Heart right ventricle (tissue), 16 donors: ENCODE measurements at regions of chr9 and their contacts with region 1.

Region 1: GRCh38 chr9:137114610-137115391 is at the start of gene DPP7:
- DNase-seq: peak; percentile 73 to 80
- ATAC-seq: peak; percentile 66 to 91 (median 84)
- H3K4me3 ChIP-seq: peak within 1 kb of the TSS; percentile 66 to 95 (median 86)
- H3K27ac ChIP-seq: peak within 1 kb of the TSS; percentile 62 to 95 (median 78)
- H3K4me1 ChIP-seq: peaks cover 12 to 40% (median 23%) of the 10 kb centered on the region in 9 donors
- H3K27me3 ChIP-seq: no peaks in the 10 kb centered on the region
- CTCF ChIP-seq: no peak
- total RNA-seq, gene DPP7: 91.4 to 167 (median 118) TPM

Region 2: DNA sequence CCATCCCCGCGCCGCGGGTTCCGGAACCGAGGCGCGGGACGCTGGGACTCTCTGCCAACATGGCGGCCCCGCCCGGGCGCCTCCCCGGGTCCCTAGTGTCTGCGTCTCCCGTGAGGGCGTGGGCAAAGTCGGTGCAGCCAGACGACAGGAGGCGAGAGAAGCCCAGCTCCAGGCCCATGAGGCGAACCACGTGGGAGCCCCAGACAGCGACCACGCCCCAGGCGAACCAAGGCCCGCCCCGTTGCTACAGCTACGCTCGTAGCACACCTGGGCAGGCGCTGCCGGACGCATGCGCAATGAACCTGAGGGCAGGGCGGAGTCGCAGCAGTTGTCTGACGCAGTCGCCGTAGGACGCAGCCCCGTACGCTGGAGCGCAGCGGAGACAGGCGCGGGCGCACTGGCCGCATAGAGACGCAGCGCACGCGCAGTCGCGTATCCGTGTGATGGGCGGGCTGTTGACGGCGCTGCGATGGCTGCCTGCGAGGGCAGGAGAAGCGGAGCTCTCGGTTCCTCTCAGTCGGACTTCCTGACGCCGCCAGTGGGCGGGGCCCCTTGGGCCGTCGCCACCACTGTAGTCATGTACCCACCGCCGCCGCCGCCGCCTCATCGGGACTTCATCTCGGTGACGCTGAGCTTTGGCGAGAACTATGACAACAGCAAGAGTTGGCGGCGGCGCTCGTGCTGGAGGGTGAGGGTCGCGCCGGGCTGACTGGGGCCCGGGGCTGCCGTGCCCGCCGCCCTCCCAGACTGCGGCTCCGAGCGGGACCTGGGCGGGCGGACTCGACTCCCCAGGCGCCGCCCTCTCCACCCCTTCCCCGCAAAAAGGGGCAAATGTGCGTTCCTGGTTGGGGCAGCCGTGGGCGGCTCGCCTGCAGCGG is 28.0 kb before region 1 on chr9 and contains the start of gene MAN1B1:
- intact Hi-C with region 1: loop called in 1 of 10 experiments (anchors 1 kb)
- DNase-seq: peak; percentile 97 to 99
- ATAC-seq: peak; percentile 92 to 97 (median 96)
- H3K4me3 ChIP-seq: peak within 1 kb of the TSS; percentile 67 to 96 (median 84)
- H3K27ac ChIP-seq: peak within 1 kb of the TSS; percentile 76 to 98 (median 96)
- H3K4me1 ChIP-seq: peaks cover 6 to 45% (median 24%) of the 10 kb centered on the region in 9 donors
- H3K27me3 ChIP-seq: no peaks in the 10 kb centered on the region
- CTCF ChIP-seq: no peak
- total RNA-seq, gene MAN1B1: 16.9 to 27.7 (median 20.9) TPM

Region 3: GRCh38 chr9:137240861-137241489 is 126.2 kb after region 1 on chr9 and contains the start of gene TUBB4B:
- intact Hi-C with region 1: loop called in 1 of 10 experiments (anchors 5 kb)
- DNase-seq: peak; percentile 99 to 100
- ATAC-seq: peak; percentile 85 to 94 (median 89)
- H3K4me3 ChIP-seq: peak within 1 kb of the TSS; percentile 75 to 97 (median 92)
- H3K27ac ChIP-seq: peak within 1 kb of the TSS; percentile 91 to 100 (median 98)
- H3K4me1 ChIP-seq: peaks cover 16 to 71% (median 53%) of the 10 kb centered on the region in 9 donors
- H3K27me3 ChIP-seq: no peaks in the 10 kb centered on the region
- CTCF ChIP-seq: no peak
- total RNA-seq, gene TUBB4B: 211 to 495 (median 330) TPM

Region 4: DNA sequence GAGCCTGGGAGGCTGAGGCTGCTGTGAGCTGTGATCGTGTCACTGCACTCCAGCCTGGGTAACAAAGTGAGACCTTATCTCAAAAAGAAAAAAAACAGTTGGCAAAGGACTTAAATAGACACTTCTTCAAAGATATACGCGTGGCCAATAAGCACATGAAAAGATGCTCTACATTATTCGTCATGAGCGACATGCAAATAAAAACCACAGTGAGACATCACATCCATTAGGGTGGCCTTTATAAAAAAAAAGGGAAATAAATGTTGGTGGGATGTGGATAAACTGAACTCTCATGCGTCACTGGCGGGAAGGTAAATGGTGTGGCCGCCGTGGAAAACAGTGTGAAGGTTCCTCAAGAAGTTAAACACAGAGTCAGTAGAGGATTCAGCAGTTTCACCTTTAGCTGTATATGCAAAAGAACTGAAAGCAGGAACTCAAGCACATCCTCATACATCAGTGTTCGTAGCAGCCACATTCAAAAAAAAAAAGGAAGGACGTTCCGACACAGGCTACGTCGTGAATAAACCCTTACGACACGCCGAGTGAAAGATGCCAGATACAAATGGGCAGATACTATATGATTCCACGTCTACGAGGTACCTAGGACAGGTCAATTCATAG is 211.8 kb after region 1 on chr9:
- intact Hi-C with region 1: no loop called
- DNase-seq: no peak
- ATAC-seq: peak in 1 of 8 donors; percentile 25
- H3K4me3 ChIP-seq: no peak overlapping the region
- H3K27ac ChIP-seq: peak overlapping the region in 1 of 10 donors; percentile 50
- H3K4me1 ChIP-seq: peaks cover 0 to 6% (median 4%) of the 10 kb centered on the region in 9 donors
- H3K27me3 ChIP-seq: peaks cover 0 to 3% (median 0%) of the 10 kb centered on the region in 7 donors
- CTCF ChIP-seq: no peak

Region 5: DNA sequence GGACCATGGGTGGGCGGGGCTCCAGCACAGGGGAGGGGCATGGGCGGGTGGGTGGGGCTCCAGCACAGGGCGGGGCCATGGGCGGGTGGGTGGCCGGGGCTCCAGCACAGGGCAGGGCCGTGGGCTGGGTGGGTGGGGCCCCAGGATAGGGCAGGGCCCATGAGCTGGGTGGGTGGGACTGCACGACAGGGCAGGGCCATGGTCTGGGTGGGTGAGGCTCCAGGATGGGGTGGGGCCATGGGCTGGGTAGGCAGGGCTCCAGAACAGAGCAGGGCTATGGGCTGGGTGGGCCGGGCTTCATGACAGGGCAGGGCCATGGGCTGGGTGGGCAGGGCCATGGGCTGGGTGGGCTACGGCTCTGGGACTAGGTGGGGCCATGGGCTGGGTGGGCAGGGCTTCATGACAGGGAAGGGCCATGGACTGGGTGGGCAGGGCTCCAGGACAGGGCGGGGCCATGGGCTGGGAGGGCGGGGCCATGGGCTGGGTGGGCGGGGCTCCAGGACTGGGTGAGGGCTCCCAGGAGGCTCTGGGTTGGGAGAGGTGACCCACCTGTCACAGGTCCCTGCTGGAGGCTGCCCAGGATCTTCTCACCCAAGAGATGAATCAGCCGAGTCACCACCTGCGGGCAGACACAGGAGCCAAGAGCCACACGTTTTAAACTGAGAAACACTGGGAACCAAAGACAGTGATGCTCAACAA is 377.8 kb after region 1 on chr9:
- intact Hi-C with region 1: no loop called
- DNase-seq: no peak
- ATAC-seq: peak in 2 of 8 donors; percentile 28 to 46
- H3K4me3 ChIP-seq: no peak overlapping the region
- H3K27ac ChIP-seq: no peak overlapping the region
- H3K4me1 ChIP-seq: peaks cover 0 to 10% (median 0%) of the 10 kb centered on the region in 9 donors
- H3K27me3 ChIP-seq: no peaks in the 10 kb centered on the region
- CTCF ChIP-seq: no peak